Common myeloid progenitor, CD34-positive (primary cell): ENCODE measurements at regions of chr13 and their contacts with region 1.

Region 1: DNA sequence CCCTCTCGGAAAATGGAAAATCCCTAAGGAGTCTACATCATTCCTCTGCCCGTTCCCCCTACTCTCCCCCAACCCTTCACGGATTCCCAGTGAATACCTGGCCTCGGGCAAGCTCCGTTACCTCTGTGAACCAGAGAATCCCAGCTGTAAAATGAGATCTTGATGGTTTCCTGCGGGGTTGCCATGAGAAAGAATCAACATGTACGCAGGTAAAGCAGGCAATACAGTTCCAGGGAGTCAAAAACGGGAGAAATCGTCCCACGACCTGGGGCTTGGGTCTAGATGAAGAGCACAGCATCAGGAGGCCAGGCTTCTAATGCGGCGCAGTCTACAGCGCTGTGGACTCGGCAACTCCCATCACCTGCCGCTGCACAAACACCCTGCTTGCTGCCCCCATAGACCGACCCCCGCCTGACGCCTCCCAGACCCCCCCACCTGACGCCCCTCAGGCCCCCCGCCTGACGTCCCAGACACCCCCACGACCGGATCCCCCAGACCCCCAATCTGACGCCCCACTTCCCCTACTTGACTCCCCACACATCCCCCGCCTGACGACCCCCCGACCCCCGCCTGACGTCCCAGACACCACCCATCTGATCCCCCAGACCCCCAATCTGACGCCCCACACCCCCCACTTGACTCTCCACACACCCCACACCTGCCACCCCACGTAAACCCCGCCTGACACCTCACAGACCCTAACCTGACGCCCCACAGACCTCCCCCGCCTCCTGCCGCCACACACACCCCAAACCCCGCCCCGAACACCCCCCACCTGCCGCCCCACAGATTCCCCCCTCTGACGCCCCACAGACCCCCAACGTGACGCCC is 680 bp downstream of the LIG4 start:
- DNase-seq: no peak
- H3K4me3 ChIP-seq: peak overlapping the region in 6 of 7 experiments; percentile 38 to 84 (median 46)
- H3K27ac ChIP-seq: no peak overlapping the region
- H3K4me1 ChIP-seq: peaks cover 23 to 61% (median 41%) of the 10 kb centered on the region in 4 experiments
- H3K27me3 ChIP-seq: no peaks in the 10 kb centered on the region

Region 2: GRCh38 chr13:108176685-108177274 is 37.9 kb before region 1 on chr13:
- CTCF ChIA-PET with region 1: interaction called, 21 read pairs
- POLR2A ChIA-PET with region 1: interaction called, 3 read pairs
- DNase-seq: peak; percentile 58 to 77 (median 69)
- H3K4me3 ChIP-seq: no peak overlapping the region
- H3K27ac ChIP-seq: no peak overlapping the region
- H3K4me1 ChIP-seq: no peaks in the 10 kb centered on the region
- H3K27me3 ChIP-seq: no peaks in the 10 kb centered on the region

Region 3: DNA sequence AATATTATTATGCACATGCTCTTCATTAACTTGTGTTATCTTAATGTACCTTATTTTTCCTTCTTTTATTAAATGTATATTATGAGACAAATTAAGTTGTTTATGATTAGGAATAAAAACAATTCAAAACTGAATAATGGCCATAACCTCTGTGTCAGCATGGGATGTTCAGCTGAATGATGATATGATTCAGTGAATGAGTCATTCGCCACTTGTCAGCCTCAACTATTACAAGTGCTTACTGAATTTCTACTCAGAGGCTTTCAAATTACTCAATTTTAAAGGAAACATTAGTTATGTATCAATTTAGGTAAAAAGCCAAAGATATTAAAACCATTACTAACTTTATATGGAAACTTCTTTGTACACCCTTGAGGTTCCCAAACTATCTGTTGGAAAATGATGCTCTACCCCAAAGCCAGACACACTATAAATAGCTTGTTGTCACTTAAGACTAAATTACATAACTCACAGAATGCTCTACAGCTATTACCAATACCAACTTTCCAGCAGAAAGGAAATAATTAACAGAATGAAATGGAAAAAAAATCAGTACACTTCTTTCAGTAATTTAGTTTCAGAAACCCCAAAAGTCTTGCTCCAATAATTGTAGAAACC is 13.8 kb before region 1 on chr13:
- CTCF ChIA-PET with region 1: no interaction called
- POLR2A ChIA-PET with region 1: no interaction called
- DNase-seq: no peak
- H3K4me3 ChIP-seq: no peak overlapping the region
- H3K27ac ChIP-seq: no peak overlapping the region
- H3K4me1 ChIP-seq: no peaks in the 10 kb centered on the region
- H3K27me3 ChIP-seq: peaks cover 0 to 3% (median 0%) of the 10 kb centered on the region in 5 experiments